ENCODE measurements at regions of chr4 and their contacts with region 1.

Region 1: GRCh38 chr4:68346457-68346856 is 3.4 kb downstream of the YTHDC1 start:
- DNase-seq: no peak
- H3K4me3 Mint-ChIP-seq: peak overlapping the region; percentile 98
- H3K27ac Mint-ChIP-seq: peak overlapping the region; percentile 30
- H3K4me1 Mint-ChIP-seq: peaks cover 14% of the 10 kb centered on the region
- H3K27me3 Mint-ChIP-seq: no peaks in the 10 kb centered on the region
- CTCF ChIP-seq: no peak

Region 2: DNA sequence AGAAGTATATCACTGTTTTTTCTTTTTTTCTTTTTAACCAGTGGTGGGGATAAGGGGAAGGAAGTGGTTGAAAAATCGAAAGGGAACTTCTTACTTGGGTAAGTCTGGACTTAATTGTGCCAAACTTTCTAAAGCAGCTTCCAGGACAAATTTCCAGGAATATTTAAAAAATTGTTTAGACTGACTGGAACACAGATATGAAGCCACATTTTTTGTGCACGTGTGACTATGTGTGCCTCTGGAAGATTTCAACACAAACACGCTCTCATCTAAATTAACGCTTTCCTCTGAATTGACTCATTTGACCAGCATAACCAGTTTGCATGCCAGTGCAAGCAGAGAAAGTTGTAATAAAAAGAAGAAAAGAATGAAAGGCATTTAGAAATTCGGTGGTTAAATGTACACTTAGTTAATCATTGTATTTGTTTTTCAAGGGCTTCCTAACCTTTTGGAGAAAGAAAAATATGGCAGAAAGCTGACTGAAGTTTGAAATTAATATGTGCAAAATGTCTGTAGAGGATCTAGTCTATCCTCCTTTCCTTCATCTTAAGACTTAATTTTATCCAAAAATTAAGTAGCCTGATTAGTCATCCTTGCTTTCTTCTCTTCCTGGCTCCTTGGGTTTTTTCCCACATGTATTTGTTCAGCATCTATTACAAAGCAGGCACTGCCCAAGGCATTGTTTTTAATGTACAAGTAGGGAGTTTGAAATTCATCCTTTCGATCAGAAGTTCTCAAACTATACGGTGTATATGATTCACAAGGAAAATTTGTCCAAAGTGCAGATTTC is 22.4 kb after region 1 on chr4:
- CTCF ChIA-PET with region 1: no interaction called
- intact Hi-C with region 1: loop called (anchors 2 kb)
- DNase-seq: peak; percentile 40
- H3K4me3 Mint-ChIP-seq: peak overlapping the region; percentile 52
- H3K27ac Mint-ChIP-seq: peak overlapping the region; percentile 88
- H3K4me1 Mint-ChIP-seq: peaks cover 12% of the 10 kb centered on the region
- H3K27me3 Mint-ChIP-seq: no peaks in the 10 kb centered on the region
- CTCF ChIP-seq: no peak